H1 (cell line): ENCODE measurements at regions of chr19 and their contacts with region 1.

Region 1: GRCh38 chr19:1074544-1075283 is 7.7 kb downstream of the ARHGAP45 start:
- DNase-seq: no peak
- H3K4me3 ChIP-seq: no peak overlapping the region
- H3K27ac ChIP-seq: no peak overlapping the region
- H3K4me1 ChIP-seq: peaks cover 0 to 4% (median 1%) of the 10 kb centered on the region in 4 experiments; a peak in 2 of 7 replicates
- H3K27me3 ChIP-seq: peaks cover 0 to 4% (median 2%) of the 10 kb centered on the region in 4 experiments; a peak in 2 of 7 replicates
- CTCF ChIP-seq: no peak
- EP300 ChIP-seq: no peak
- POLR2A ChIP-seq: no peak
- RAD21 ChIP-seq: no peak

Region 2: DNA sequence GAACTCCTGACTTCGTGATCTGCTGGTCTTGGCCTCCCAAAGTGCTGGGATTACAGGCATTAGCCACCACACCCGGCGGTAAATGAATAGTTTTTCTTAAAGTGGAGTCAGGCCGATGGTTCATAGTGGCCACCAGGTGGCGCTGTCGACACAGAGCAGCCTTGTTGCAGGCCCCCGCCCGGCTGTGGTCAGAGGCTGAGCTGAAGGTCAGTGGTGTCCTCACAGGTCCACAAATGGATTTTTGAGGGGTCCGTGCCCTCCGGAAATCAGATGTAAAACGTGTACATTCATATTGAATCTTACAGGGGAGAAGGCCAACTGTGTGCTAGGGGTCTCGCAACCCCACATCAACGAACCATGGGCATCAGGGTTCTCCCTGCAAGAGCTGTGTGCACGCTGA is 104.0 kb before region 1 on chr19:
- CTCF ChIA-PET with region 1: no interaction called
- POLR2A ChIA-PET with region 1: no interaction called
- DNase-seq: peak in 1 of 2 experiments; percentile 63
- H3K4me3 ChIP-seq: no peak overlapping the region
- H3K27ac ChIP-seq: no peak overlapping the region
- H3K4me1 ChIP-seq: peaks cover 0 to 3% (median 0%) of the 10 kb centered on the region in 4 experiments; a peak in 1 of 7 replicates
- H3K27me3 ChIP-seq: no peaks in the 10 kb centered on the region
- CTCF ChIP-seq: peak; percentile 79 to 90 (median 79)
- EP300 ChIP-seq: no peak
- POLR2A ChIP-seq: no peak
- RAD21 ChIP-seq: peak; percentile 46 to 63

Region 3: GRCh38 chr19:1103708-1104310 is 29.1 kb after region 1 on chr19 and contains the start of gene GPX4:
- CTCF ChIA-PET with region 1: interaction called, 4 read pairs
- POLR2A ChIA-PET with region 1: interaction called, 12 read pairs
- DNase-seq: peak; percentile 95 to 98
- H3K4me3 ChIP-seq: peak within 1 kb of the TSS; percentile 57 to 93 (median 64)
- H3K27ac ChIP-seq: peak within 1 kb of the TSS; percentile 66; the same call in 1 of the 2 replicates
- H3K4me1 ChIP-seq: peaks cover 4 to 21% (median 8%) of the 10 kb centered on the region in 4 experiments
- H3K27me3 ChIP-seq: no peaks in the 10 kb centered on the region
- CTCF ChIP-seq: no peak
- EP300 ChIP-seq: no peak
- POLR2A ChIP-seq: peak; percentile 95 to 96
- RAD21 ChIP-seq: no peak
- total RNA-seq, gene GPX4: 342 and 355 TPM in 2 replicates

Region 4: GRCh38 chr19:1147934-1148549 is 73.3 kb after region 1 on chr19:
- CTCF ChIA-PET with region 1: no interaction called
- POLR2A ChIA-PET with region 1: no interaction called
- DNase-seq: no peak
- H3K4me3 ChIP-seq: no peak overlapping the region
- H3K27ac ChIP-seq: no peak overlapping the region
- H3K4me1 ChIP-seq: peaks cover 0 to 15% (median 7%) of the 10 kb centered on the region in 4 experiments; a peak in 5 of 7 replicates
- H3K27me3 ChIP-seq: no peaks in the 10 kb centered on the region
- CTCF ChIP-seq: no peak
- EP300 ChIP-seq: no peak
- POLR2A ChIP-seq: no peak
- RAD21 ChIP-seq: no peak